HepG2 (cell line): ENCODE measurements at regions of chr6 and their contacts with region 1.

Region 1: DNA sequence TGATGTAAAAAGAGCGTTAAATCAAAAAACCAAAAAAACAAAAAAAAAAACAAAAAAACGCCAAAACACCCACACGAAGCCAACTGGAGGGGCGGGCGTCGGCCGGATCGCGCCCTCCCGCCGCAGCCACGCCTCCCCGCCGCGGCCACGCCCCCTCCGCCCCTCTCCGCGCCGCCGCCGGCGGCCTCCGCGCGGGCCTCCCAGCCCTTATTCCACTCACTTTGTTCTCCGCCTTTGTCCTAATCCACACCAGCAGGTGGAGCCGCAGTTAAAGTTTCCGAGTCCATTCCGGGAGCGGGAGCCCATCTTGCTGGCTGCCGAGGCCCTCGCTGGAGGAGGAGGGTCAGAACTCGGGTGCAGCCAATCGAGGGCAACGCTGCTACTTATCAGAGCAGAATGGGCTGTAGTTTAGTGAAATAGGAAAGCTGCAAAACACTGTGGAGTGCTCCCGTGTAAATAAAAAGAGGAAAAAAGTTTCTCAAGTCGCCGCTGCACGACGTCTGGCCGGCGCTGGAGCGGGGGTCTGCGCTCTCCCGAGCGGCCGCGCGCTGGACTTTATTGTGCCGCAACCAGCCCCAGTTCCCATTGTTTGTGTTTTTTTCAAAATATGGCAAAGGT is at the start of gene ASF1A:
- DNase-seq: peak; percentile 99
- ATAC-seq: peak; percentile 93
- H3K4me3 ChIP-seq: peak within 1 kb of the TSS; percentile 84 to 98 (median 94)
- H3K27ac ChIP-seq: peak within 1 kb of the TSS; percentile 96
- H3K4me1 ChIP-seq: peaks cover 44% of the 10 kb centered on the region
- H3K27me3 ChIP-seq: no peaks in the 10 kb centered on the region; a peak in 1 of 5 replicates
- CTCF ChIP-seq: peak; percentile 94
- EP300 ChIP-seq: peak; percentile 45 to 68
- POLR2A ChIP-seq: peak; percentile 77 to 95
- RAD21 ChIP-seq: peak; percentile 74
- total RNA-seq, gene ASF1A: 49.9 and 85.2 TPM in 2 replicates

Region 2: GRCh38 chr6:118800394-118801071 is 93.4 kb before region 1 on chr6:
- CTCF ChIA-PET with region 1: interaction called, 3 read pairs
- POLR2A ChIA-PET with region 1: no interaction called
- in situ Hi-C with region 1: no loop called
- intact Hi-C with region 1: loop called (anchors 2 kb)
- DNase-seq: peak; percentile 82
- ATAC-seq: peak; percentile 94
- H3K4me3 ChIP-seq: peak overlapping the region in 1 of 3 experiments; percentile 31; a peak in 2 of 6 replicates
- H3K27ac ChIP-seq: no peak overlapping the region
- H3K4me1 ChIP-seq: peaks cover 16% of the 10 kb centered on the region
- H3K27me3 ChIP-seq: no peaks in the 10 kb centered on the region
- CTCF ChIP-seq: peak; percentile 92
- EP300 ChIP-seq: no peak
- POLR2A ChIP-seq: no peak
- RAD21 ChIP-seq: peak; percentile 63

Region 3: DNA sequence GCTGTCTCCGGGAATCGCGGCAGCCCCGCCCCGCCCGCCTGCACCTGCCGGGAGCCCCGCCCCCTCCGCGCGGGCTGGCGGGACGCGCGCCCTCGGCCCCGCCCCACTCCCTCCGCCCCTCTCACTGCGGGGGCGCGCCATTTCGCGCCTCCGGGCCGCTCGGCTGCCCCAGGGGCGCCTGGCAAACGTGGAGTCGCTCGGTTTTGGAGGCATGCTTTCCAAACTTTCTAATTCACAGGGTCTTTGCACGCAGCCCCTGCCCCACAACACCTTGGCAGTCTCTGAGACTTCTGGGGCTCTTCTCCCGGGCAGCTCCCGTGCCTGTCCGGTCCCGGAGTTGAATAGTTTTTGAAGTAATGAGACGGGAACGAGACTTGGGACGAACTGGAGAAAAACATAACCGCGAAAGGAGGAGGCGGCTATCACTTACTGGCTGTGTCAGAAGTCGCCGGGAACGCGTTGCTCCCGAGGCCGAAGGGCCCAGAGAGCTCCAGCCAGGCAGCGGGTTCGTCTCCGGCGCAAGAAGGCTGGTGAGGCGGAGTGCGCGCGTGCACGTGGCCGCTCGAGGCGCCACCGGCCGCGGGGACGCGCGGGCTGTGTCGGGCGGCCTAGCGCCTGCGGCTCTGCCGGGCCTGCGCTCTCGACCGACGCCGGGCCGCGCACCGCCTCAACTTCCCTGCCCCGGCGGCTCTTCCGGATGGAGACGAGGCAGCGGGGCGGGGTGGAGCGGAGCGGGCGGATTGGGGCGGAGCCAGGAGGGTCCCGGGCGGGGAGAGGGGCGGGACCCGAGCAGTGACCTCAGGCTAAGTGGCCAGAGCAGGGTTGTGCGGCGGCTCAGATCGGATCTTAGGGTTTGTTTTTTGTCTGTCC is 40.8 kb after region 1 on chr6 and contains the start of gene MCM9:
- CTCF ChIA-PET with region 1: no interaction called
- POLR2A ChIA-PET with region 1: interaction called, 10 read pairs
- in situ Hi-C with region 1: no loop called
- intact Hi-C with region 1: loop called (anchors 1 kb)
- DNase-seq: peak; percentile 90
- ATAC-seq: peak; percentile 98
- H3K4me3 ChIP-seq: peak within 1 kb of the TSS; percentile 77 to 99 (median 89)
- H3K27ac ChIP-seq: peak within 1 kb of the TSS; percentile 92
- H3K4me1 ChIP-seq: peaks cover 31% of the 10 kb centered on the region
- H3K27me3 ChIP-seq: no peaks in the 10 kb centered on the region; a peak in 1 of 5 replicates
- CTCF ChIP-seq: no peak
- EP300 ChIP-seq: peak in 1 of 2 experiments; percentile 22; a peak in 1 of 4 replicates
- POLR2A ChIP-seq: peak; percentile 73 to 78
- RAD21 ChIP-seq: peak; percentile 41; the same call in 1 of the 2 replicates
- total RNA-seq, gene MCM9: 11.6 and 17.2 TPM in 2 replicates

Region 4: DNA sequence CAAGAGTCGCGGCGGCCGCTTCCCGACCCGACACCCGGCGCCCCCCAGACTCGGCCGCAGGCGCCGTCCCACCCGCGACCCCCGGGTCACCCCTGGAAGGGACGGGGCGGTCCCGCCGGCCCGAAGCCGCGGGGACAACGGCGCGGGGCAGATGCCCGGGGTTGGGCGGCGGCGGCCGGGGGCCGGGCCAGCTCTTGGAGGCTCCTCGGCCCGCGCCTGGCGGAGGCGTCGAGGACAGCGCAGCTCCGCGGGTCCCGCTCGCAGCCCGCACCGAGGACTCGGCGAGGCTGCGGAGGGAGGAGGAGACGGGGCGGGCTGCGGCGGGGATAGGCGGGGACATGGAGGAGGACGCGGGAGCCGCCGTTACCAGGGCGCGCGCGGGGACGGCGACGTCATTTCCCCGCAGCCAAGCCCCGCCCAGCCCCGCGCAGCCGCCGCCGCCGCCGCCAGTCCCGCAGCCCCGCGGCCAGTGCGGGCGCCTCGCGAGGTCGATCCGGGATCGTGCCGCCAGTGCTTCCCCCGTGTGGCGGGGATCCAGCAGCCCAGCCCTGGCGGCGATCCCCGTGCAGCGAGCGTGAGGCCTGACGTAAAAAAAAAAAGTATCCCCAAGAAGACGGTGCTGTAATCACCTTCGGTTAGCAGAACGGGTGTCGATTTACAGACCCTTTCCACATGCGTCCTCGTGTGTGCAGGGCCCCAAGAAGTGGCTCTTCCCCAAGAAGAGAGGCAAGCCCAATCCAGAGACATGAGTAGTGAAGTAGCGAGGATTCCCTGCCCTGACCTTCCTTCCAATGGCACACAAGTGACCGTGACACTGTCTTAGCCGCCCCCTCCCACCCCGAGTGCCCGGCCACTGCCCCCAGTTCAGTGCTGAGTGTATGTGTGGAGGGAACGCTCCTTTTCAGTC is 184.7 kb after region 1 on chr6 and contains the start of gene FAM184A:
- CTCF ChIA-PET with region 1: interaction called, 5 read pairs
- POLR2A ChIA-PET with region 1: interaction called, 3 read pairs
- in situ Hi-C with region 1: no loop called
- intact Hi-C with region 1: loop called (anchors 1 kb)
- DNase-seq: peak; percentile 55
- ATAC-seq: peak; percentile 90
- H3K4me3 ChIP-seq: peak within 1 kb of the TSS; percentile 60 to 83 (median 78)
- H3K27ac ChIP-seq: peak within 1 kb of the TSS; percentile 27
- H3K4me1 ChIP-seq: peaks cover 33% of the 10 kb centered on the region
- H3K27me3 ChIP-seq: peaks cover 0 to 19% of the 10 kb centered on the region in 2 experiments; a peak in 4 of 5 replicates
- CTCF ChIP-seq: peak; percentile 71
- EP300 ChIP-seq: no peak
- POLR2A ChIP-seq: no peak; a peak in 1 of 4 replicates
- RAD21 ChIP-seq: peak; percentile 75
- total RNA-seq, gene FAM184A: 16.0 and 18.0 TPM in 2 replicates

Region 5: GRCh38 chr6:119267126-119267905 is 373.4 kb after region 1 on chr6:
- CTCF ChIA-PET with region 1: no interaction called
- POLR2A ChIA-PET with region 1: no interaction called
- in situ Hi-C with region 1: no loop called
- intact Hi-C with region 1: loop called (anchors 10 kb)
- DNase-seq: no peak
- ATAC-seq: peak; percentile 18; the same call in 1 of the 3 replicates
- H3K4me3 ChIP-seq: no peak overlapping the region
- H3K27ac ChIP-seq: no peak overlapping the region
- H3K4me1 ChIP-seq: peaks cover 63% of the 10 kb centered on the region
- H3K27me3 ChIP-seq: no peaks in the 10 kb centered on the region
- CTCF ChIP-seq: no peak
- EP300 ChIP-seq: no peak
- POLR2A ChIP-seq: no peak
- RAD21 ChIP-seq: no peak

Region 6: GRCh38 chr6:119353696-119354095 is 459.8 kb after region 1 on chr6:
- CTCF ChIA-PET with region 1: no interaction called
- POLR2A ChIA-PET with region 1: no interaction called
- in situ Hi-C with region 1: no loop called
- intact Hi-C with region 1: no loop called
- DNase-seq: no peak
- ATAC-seq: no peak
- H3K4me3 ChIP-seq: no peak overlapping the region
- H3K27ac ChIP-seq: no peak overlapping the region
- H3K4me1 ChIP-seq: peaks cover 21% of the 10 kb centered on the region
- H3K27me3 ChIP-seq: no peaks in the 10 kb centered on the region; a peak in 1 of 5 replicates
- CTCF ChIP-seq: no peak
- EP300 ChIP-seq: no peak
- POLR2A ChIP-seq: no peak
- RAD21 ChIP-seq: no peak